ENCODE measurements at regions of chr3 and their contacts with region 1.

Region 1: DNA sequence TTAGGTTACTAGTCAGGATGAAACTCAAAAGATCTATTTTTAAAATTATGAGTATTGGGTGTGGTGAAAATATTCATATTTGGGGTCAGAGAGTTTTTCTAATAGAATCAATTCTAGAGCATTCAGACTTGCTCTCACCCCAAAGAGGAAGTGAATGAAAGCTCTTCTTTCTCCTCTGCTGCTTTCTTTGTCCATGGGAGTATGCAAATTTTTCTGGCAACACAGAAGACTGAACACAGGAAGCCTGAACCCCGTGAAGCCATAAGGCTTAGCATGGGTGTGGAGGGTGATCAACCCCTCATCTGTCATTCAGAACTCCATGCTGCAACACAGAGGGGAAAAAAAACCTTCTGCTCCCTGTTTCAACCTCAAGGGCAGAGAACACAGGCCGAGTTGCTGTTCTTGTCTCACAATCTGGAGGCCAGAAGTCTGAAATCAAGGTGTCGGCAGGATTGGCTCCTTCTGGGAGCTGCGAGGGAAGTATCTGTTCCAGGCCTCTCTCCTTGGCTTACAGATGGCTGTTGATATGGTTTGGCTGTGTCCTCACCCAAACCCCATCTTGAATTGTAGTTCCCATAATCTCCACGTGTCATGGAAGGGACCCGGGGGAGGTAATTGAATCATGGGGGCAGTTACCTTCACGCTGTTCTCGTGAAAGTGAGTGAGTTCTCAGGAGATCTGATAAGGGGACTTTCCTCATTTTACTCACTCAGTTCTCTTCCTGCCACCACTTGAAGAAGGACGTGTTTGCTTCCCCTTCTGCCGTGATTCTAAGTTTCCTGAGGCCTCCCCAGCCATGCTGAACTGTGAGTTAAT is 33.7 kb upstream of the CD47 start:
- DNase-seq: peak; percentile 94
- H3K4me3 ChIP-seq: peak overlapping the region; percentile 81
- H3K27ac ChIP-seq: peak overlapping the region; percentile 95
- H3K4me1 ChIP-seq: peaks cover 62% of the 10 kb centered on the region
- CTCF ChIP-seq: 0 out of 2 replicates have a peak, but pooled peaks have one; percentile 1

Region 2: DNA sequence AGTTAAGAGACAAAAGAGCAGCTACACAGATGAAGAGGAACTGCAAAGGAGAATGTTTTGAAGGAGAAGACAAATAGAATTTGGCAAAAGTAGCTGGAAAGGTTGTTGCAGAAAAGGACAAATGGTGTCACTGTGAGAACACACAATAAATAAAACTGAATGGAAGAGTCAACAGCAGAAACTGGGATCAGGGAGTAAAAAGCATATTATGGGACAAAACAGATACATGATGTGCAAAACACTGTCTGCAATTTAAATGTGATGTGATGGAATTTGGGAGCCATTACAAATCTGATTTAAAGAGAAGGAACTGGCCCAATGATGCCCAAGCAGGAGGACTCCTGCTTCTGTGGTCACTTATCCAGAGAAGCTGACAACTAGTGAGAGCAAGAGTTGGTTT is 79.8 kb before region 1 on chr3:
- CTCF ChIA-PET with region 1: no interaction called
- POLR2A ChIA-PET with region 1: interaction called, 11 read pairs
- intact Hi-C with region 1: no loop called
- DNase-seq: no peak
- H3K4me3 ChIP-seq: no peak overlapping the region
- H3K27ac ChIP-seq: no peak overlapping the region
- H3K4me1 ChIP-seq: no peaks in the 10 kb centered on the region
- CTCF ChIP-seq: no peak

Region 3: GRCh38 chr3:108062051-108062450 is 62.5 kb before region 1 on chr3:
- CTCF ChIA-PET with region 1: no interaction called
- POLR2A ChIA-PET with region 1: no interaction called
- intact Hi-C with region 1: no loop called
- DNase-seq: peak; percentile 30
- H3K4me3 ChIP-seq: no peak overlapping the region
- H3K27ac ChIP-seq: no peak overlapping the region
- H3K4me1 ChIP-seq: peaks cover 9% of the 10 kb centered on the region
- CTCF ChIP-seq: no peak

Region 4: DNA sequence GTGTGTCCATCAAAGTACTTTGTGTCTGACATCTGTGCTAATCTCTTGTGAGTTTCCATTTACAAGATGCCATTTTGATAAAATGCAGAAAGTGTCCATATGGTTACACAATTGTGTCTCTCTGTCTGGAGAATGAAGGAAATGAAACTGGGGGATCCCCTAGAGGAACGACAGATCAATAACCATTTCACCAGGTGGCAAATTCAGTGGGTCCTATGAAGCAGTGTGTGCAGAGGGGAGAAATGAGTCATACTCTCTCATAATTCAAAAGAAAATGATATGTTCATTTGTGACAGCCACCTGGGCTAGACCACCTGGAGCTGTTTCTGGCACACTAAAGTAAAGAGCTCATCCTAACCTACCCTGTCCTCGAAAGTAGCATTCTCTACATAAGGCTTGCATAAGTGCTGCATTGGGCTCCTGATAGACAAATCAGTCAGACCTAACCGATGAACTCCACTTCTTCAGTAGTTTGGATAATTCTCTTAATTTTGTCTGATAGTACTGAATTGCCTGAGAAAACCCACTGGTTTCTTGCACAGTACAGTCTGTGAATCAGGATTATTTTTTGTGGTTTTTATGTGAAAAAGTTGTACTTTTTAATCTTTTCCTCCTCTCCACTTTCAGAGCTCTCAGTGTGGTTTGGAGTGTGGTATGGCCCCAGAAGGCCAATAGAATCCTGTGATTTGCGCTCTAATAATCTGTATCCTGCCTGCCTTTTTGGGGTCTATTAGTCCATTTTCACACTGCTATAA is 23.5 kb before region 1 on chr3:
- CTCF ChIA-PET with region 1: interaction called, 3 read pairs
- POLR2A ChIA-PET with region 1: interaction called, 13 read pairs
- intact Hi-C with region 1: no loop called
- DNase-seq: peak; percentile 90
- H3K4me3 ChIP-seq: peak overlapping the region; percentile 1
- H3K27ac ChIP-seq: peak overlapping the region; percentile 70
- H3K4me1 ChIP-seq: peaks cover 39% of the 10 kb centered on the region
- CTCF ChIP-seq: no peak

Region 5: GRCh38 chr3:108221911-108222852 is 97.6 kb after region 1 on chr3 and contains the start of gene IFT57:
- CTCF ChIA-PET with region 1: no interaction called
- POLR2A ChIA-PET with region 1: interaction called, 39 read pairs
- intact Hi-C with region 1: loop called (anchors 1 kb)
- DNase-seq: peak; percentile 98
- H3K4me3 ChIP-seq: peak within 1 kb of the TSS; percentile 92
- H3K27ac ChIP-seq: peak within 1 kb of the TSS; percentile 75
- H3K4me1 ChIP-seq: peaks cover 42% of the 10 kb centered on the region
- CTCF ChIP-seq: no peak
- total RNA-seq, gene IFT57: 61.9 and 68.2 TPM in 2 replicates